ENCODE measurements at regions of chr17 and their contacts with region 1.

Region 1: GRCh38 chr17:77372444-77373298 is 231.9 kb downstream of the SEC14L1 start:
- DNase-seq: peak in 13 of 14 experiments; percentile 30 to 78 (median 58)
- ATAC-seq: peak; percentile 25
- H3K4me3 ChIP-seq: peak overlapping the region; percentile 100
- H3K4me3 Mint-ChIP-seq: peak overlapping the region; percentile 93
- H3K27ac ChIP-seq: peak overlapping the region; percentile 45 to 60
- H3K27ac Mint-ChIP-seq: peak overlapping the region; percentile 91
- H3K4me1 ChIP-seq: peaks cover 73% of the 10 kb centered on the region
- H3K4me1 Mint-ChIP-seq: peaks cover 75% of the 10 kb centered on the region
- H3K27me3 ChIP-seq: no peaks in the 10 kb centered on the region
- H3K27me3 Mint-ChIP-seq: no peaks in the 10 kb centered on the region
- CTCF ChIP-seq: no peak

Region 2: GRCh38 chr17:77331301-77331864 is 41.3 kb before region 1 on chr17:
- CTCF ChIA-PET with region 1: interaction called, 40 read pairs
- POLR2A ChIA-PET with region 1: interaction called, 91 read pairs
- intact Hi-C with region 1: loop called (anchors 1 to 2 kb)
- DNase-seq: peak; percentile 92 to 99 (median 98)
- ATAC-seq: peak; percentile 84
- H3K4me3 ChIP-seq: peak overlapping the region; percentile 51
- H3K4me3 Mint-ChIP-seq: peak overlapping the region; percentile 90
- H3K27ac ChIP-seq: peak overlapping the region; percentile 47 to 55
- H3K27ac Mint-ChIP-seq: peak overlapping the region; percentile 88
- H3K4me1 ChIP-seq: peaks cover 52% of the 10 kb centered on the region
- H3K4me1 Mint-ChIP-seq: peaks cover 59% of the 10 kb centered on the region
- H3K27me3 ChIP-seq: no peaks in the 10 kb centered on the region
- H3K27me3 Mint-ChIP-seq: no peaks in the 10 kb centered on the region
- CTCF ChIP-seq: peak; percentile 92

Region 3: DNA sequence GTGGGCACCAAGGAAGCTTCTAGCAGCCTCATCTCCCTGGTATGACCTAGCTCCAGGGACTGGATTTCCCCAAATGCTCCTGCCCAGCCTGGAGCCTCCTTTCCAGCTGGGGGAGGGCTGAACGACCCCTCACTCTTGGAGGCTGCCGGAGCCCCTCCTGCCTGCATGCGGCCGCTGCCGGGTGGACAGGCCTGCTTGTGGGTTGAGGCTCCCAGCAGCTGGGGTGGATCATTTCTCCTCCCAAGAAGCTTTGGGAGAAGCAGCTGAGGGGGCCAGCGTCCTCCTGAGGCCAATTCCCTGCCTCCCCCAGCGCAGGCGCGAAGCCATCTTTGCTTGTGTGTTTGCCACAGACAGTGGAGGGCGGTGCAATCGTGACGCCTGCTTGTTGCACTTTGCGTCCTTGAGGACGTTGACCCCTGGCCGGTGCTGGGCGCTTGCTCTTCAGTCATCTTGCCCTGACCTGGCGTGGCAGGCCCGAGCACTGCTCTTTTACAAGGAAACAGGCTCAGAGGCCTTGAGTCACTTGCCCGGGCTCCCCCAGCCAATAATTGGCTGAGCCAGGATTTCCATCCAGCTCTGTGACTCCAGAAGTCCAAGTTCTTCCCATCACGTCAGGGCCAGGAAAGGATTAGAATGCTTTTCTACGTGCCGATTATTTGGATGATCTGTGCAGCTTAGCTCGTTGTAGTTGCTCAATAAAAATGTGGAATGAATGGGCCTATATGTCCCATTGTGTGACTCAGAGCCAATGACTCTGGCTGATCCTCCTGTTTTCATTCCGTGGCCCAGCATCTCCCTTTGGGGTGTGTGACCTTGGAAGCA is 18.0 kb before region 1 on chr17:
- CTCF ChIA-PET with region 1: interaction called, 14 read pairs
- POLR2A ChIA-PET with region 1: interaction called, 5 read pairs
- intact Hi-C with region 1: no loop called
- DNase-seq: peak in 1 of 14 experiments; percentile 21
- ATAC-seq: no peak
- H3K4me3 ChIP-seq: no peak overlapping the region
- H3K4me3 Mint-ChIP-seq: no peak overlapping the region
- H3K27ac ChIP-seq: no peak overlapping the region
- H3K27ac Mint-ChIP-seq: no peak overlapping the region
- H3K4me1 ChIP-seq: peaks cover 38% of the 10 kb centered on the region
- H3K4me1 Mint-ChIP-seq: peaks cover 43% of the 10 kb centered on the region
- H3K27me3 ChIP-seq: no peaks in the 10 kb centered on the region
- H3K27me3 Mint-ChIP-seq: no peaks in the 10 kb centered on the region
- CTCF ChIP-seq: no peak

Region 4: DNA sequence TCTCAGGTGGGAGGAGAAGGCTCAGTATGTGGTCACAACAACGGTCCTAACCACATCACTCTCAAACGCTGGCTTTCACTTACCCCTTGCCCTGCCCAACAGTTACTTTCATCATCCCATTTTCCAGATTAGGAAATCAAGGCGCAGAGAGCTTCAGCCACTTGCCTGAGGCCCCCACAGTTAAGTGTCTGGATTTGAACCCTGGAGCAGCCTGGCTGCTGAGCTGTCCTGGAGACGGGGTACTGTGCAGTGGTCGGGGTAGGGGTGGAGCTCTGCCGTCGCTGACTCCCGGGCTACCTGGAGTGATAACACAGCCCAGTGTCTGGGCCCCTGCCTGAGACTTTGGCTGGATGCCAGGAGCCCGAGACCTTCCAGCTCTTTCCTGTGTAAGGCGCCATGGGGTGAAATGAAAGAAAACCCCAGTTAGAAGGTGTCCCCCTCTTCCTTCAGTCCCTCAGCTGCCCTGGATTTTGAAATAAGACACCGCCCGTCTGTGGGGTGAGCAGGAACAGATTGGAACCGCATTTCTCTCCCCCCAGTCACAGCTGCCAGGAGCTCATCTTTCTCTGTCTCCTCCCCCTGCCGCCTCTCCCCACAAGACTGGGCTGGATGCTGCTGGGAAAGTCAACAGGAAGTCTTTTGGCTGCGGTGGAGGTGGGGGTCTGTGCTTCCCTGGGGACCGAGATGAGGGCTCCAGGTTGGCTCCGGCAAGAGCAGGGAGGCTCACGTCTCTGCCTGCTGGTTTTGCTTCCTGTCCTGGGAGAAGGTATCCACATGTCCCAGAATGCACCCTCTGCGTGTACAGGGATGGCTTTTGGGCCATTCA is 48.3 kb after region 1 on chr17:
- CTCF ChIA-PET with region 1: no interaction called
- POLR2A ChIA-PET with region 1: interaction called, 58 read pairs
- intact Hi-C with region 1: no loop called
- DNase-seq: peak; percentile 44 to 82 (median 66)
- ATAC-seq: peak; percentile 69
- H3K4me3 ChIP-seq: peak overlapping the region; percentile 31
- H3K4me3 Mint-ChIP-seq: peak overlapping the region; percentile 83
- H3K27ac ChIP-seq: peak overlapping the region; percentile 61 to 76
- H3K27ac Mint-ChIP-seq: peak overlapping the region; percentile 89
- H3K4me1 ChIP-seq: peaks cover 92% of the 10 kb centered on the region
- H3K4me1 Mint-ChIP-seq: peaks cover 65% of the 10 kb centered on the region
- H3K27me3 ChIP-seq: no peaks in the 10 kb centered on the region
- H3K27me3 Mint-ChIP-seq: no peaks in the 10 kb centered on the region
- CTCF ChIP-seq: no peak

Region 5: GRCh38 chr17:77437017-77437416 is 64.3 kb after region 1 on chr17:
- CTCF ChIA-PET with region 1: interaction called, 7 read pairs
- POLR2A ChIA-PET with region 1: interaction called, 37 read pairs
- intact Hi-C with region 1: no loop called
- DNase-seq: peak in 5 of 14 experiments; percentile 34 to 68 (median 67)
- ATAC-seq: no peak
- H3K4me3 ChIP-seq: peak overlapping the region; percentile 55
- H3K4me3 Mint-ChIP-seq: peak overlapping the region; percentile 96
- H3K27ac ChIP-seq: peak overlapping the region; percentile 79 to 98
- H3K27ac Mint-ChIP-seq: peak overlapping the region; percentile 93
- H3K4me1 ChIP-seq: peaks cover 100% of the 10 kb centered on the region
- H3K4me1 Mint-ChIP-seq: peaks cover 97% of the 10 kb centered on the region
- H3K27me3 ChIP-seq: no peaks in the 10 kb centered on the region
- H3K27me3 Mint-ChIP-seq: no peaks in the 10 kb centered on the region
- CTCF ChIP-seq: no peak

Region 6: GRCh38 chr17:77465358-77466041 is 92.8 kb after region 1 on chr17:
- CTCF ChIA-PET with region 1: no interaction called
- POLR2A ChIA-PET with region 1: interaction called, 16 read pairs
- intact Hi-C with region 1: no loop called
- DNase-seq: peak; percentile 63 to 91 (median 78)
- ATAC-seq: peak; percentile 93
- H3K4me3 ChIP-seq: peak overlapping the region; percentile 39
- H3K4me3 Mint-ChIP-seq: peak overlapping the region; percentile 85
- H3K27ac ChIP-seq: peak overlapping the region; percentile 58 to 74
- H3K27ac Mint-ChIP-seq: peak overlapping the region; percentile 96
- H3K4me1 ChIP-seq: peaks cover 100% of the 10 kb centered on the region
- H3K4me1 Mint-ChIP-seq: peaks cover 84% of the 10 kb centered on the region
- H3K27me3 ChIP-seq: no peaks in the 10 kb centered on the region
- H3K27me3 Mint-ChIP-seq: no peaks in the 10 kb centered on the region
- CTCF ChIP-seq: no peak

Region 7: GRCh38 chr17:77528516-77529327 is 156.1 kb after region 1 on chr17:
- CTCF ChIA-PET with region 1: no interaction called
- POLR2A ChIA-PET with region 1: no interaction called
- intact Hi-C with region 1: no loop called
- DNase-seq: peak in 7 of 14 experiments; percentile 4 to 46 (median 18)
- ATAC-seq: peak; percentile 65
- H3K4me3 ChIP-seq: no peak overlapping the region
- H3K4me3 Mint-ChIP-seq: no peak overlapping the region
- H3K27ac ChIP-seq: no peak overlapping the region
- H3K27ac Mint-ChIP-seq: no peak overlapping the region
- H3K4me1 ChIP-seq: peaks cover 11% of the 10 kb centered on the region
- H3K4me1 Mint-ChIP-seq: peaks cover 13% of the 10 kb centered on the region
- H3K27me3 ChIP-seq: peaks cover 18 to 20% of the 10 kb centered on the region in 2 experiments
- H3K27me3 Mint-ChIP-seq: peaks cover 16% of the 10 kb centered on the region
- CTCF ChIP-seq: no peak